Gastrocnemius medialis (tissue), 4 donors: ENCODE measurements at regions of chr7 and their contacts with region 1.

Region 1: DNA sequence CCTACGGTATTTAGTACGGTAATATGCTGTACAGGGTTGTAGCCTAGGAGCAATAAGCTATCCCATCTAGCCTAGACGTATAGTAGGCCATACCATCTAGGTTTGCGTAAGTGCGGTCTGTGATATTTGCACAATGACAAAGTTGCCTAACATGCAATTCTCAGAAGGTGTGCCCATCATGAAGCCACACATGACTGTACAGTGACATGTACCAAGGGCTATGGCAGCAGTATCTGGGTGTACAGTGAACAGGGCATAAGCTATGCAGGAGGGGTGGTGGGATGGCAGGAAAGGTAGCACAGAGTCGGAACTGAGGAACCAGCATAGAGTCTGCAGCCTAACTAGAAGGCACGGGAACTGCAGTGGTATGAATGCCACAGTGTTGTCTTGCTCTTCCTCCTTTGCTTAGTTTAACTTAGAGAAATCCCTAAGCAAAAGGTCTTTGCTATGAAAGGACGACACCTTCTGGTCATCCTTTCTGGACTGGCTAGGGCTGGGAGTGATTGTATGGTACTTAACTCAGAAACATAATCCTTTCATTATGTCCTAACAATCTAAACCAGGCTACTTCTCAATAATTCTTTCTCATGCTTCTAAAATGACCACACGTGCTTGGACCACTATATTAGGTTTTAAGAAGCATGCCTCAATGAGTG is 93.5 kb downstream of the DYNC1I1 start:
- DNase-seq: no peak
- ATAC-seq: no peak
- H3K4me3 ChIP-seq: no peak overlapping the region
- H3K27ac ChIP-seq: no peak overlapping the region
- H3K4me1 ChIP-seq: no peaks in the 10 kb centered on the region
- H3K27me3 ChIP-seq: no peaks in the 10 kb centered on the region
- CTCF ChIP-seq: no peak
- POLR2A ChIP-seq: no peak

Region 2: DNA sequence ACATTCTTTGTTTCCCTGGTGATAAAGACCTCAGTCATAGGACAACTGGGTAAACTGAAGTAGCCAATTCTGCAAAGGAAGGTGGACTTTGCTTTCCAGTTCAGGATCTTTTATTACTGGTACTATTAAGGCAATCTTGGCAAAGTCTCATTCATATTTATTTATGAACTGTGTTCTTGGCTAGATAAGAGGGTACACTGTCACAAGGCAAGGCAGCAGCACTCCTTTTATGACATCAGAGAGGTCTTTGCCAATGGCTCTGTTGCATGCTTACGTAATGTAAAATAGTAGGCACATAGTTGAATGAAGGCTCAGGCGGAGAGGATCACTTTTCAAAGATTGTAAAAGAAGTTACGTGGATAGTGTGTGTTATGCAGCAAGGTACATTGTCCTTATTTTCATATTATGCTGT is 205.8 kb before region 1 on chr7:
- in situ Hi-C with region 1: no loop called
- intact Hi-C with region 1: no loop called
- DNase-seq: peak; percentile 65 to 77
- ATAC-seq: peak; percentile 99 to 100
- H3K4me3 ChIP-seq: no peak overlapping the region
- H3K27ac ChIP-seq: peak overlapping the region; percentile 73 to 83 (median 74)
- H3K4me1 ChIP-seq: peaks cover 10 to 15% of the 10 kb centered on the region in 2 donors
- H3K27me3 ChIP-seq: no peaks in the 10 kb centered on the region
- CTCF ChIP-seq: no peak
- POLR2A ChIP-seq: peak in 1 of 2 donors; percentile 55

Region 3: DNA sequence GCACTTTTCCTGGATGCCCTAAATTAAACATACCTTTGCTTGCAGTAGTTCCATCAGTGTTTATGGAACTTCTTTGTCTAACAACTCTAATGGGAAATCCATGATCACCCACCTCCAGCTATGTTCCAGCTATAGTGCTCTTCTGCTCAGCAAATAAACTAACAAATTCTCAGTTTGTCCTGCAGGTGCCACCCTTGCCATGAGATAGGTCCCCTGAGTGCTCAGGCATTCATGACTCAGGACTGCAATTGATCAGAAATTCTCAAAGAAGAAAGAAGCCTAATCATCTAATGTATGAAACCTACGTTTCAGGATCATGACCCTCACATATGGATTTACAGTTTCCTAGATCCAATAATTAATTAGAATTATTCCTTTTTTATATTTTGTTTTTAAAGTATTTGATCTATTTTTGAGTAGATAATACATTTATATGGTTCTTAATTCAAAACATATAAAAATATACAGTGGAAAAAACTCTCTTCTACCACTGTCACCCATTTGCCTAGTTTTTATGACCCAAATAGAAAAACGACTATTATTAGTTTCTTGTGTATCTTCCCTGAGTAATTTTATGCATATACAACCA is 142.2 kb before region 1 on chr7:
- in situ Hi-C with region 1: loop called in 3 of 4 experiments (anchors 5 to 10 kb)
- intact Hi-C with region 1: loop called (anchors 2 kb)
- DNase-seq: no peak
- ATAC-seq: peak in 1 of 2 donors; percentile 60
- H3K4me3 ChIP-seq: no peak overlapping the region
- H3K27ac ChIP-seq: no peak overlapping the region
- H3K4me1 ChIP-seq: no peaks in the 10 kb centered on the region
- H3K27me3 ChIP-seq: no peaks in the 10 kb centered on the region
- CTCF ChIP-seq: peak in 2 of 5 experiments; percentile 25 to 32
- POLR2A ChIP-seq: no peak

Region 4: DNA sequence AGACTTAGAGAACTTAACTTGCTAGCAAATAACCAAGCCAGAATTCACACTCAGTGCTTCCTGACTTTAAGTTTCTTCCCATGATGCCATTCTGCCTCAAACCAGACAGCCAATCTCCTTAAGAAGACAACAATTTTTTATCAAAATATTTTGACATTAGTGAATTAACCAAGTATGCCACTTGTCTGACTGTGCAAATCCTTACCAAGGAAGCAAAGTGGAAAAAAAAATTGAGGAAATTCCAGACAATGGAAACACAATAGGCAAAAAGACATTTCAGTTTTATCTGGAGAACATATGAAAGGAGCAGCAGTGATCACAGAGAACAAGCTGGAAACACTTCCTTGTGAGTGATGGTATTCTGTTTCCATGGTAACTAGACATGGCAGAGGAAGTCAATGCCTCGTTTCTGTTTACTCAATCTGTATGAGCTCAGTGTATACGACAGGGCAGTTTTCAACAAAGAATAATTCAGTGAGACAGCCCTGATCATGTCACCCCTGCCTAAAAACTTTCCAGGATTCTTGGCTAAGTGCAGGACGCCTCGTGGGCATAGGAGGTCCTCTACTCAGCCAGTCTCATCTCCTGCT is 20.8 kb after region 1 on chr7:
- in situ Hi-C with region 1: no loop called
- intact Hi-C with region 1: no loop called
- DNase-seq: no peak
- ATAC-seq: no peak
- H3K4me3 ChIP-seq: no peak overlapping the region
- H3K27ac ChIP-seq: no peak overlapping the region
- H3K4me1 ChIP-seq: no peaks in the 10 kb centered on the region
- H3K27me3 ChIP-seq: no peaks in the 10 kb centered on the region
- CTCF ChIP-seq: no peak
- POLR2A ChIP-seq: no peak